Stomach (tissue), 19 donors: ENCODE measurements at regions of chr4 and their contacts with region 1.

Region 1: DNA sequence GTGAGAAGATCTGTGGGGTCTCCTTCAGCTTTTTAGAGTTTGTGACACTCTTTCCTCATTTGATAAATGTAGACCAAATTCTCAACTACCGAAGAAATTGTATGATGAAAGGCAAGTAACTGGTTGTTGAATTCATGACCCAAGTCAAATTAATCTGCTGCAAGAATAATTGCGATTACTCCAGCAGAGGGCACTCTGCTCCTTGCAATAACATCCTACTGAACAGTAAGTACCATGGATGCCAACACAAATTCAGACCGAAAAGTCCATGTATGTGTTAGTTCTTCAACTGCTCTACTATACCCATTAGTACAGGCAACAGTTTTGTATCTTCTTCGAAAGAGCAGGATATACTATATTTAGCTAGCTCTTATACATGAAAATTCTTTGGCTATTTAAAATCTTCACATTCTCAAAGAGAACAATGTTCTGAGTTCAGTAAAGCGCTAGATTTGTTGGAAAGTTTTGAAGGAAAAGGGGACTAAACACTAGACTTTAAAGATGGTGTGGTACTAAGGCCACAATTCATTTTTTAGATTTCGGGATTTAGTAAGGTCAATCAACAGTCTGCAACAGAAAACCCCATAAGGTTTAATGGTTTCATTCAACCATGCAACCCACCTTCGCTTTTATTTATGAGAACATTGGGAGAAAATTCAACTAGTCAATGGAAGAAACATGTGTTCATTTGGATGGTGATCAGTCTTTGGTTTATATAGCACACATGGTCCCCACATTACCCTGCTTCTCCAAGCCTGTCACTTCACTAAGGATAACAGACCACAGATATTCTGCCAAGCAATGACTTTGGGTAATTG is 105.4 kb upstream of the TBC1D9 start:
- DNase-seq: peak; percentile 66 to 94
- H3K4me3 ChIP-seq: no peak overlapping the region
- H3K27ac ChIP-seq: no peak overlapping the region
- H3K4me1 ChIP-seq: peaks cover 0 to 24% (median 7%) of the 10 kb centered on the region in 4 donors
- H3K27me3 ChIP-seq: no peaks in the 10 kb centered on the region
- CTCF ChIP-seq: peak in 5 of 7 experiments; percentile 45 to 78 (median 62)
- EP300 ChIP-seq: no peak
- POLR2A ChIP-seq: no peak

Region 2: GRCh38 chr4:140617499-140618248 is 243.9 kb before region 1 on chr4:
- intact Hi-C with region 1: no loop called
- DNase-seq: peak; percentile 59 to 62
- H3K4me3 ChIP-seq: no peak overlapping the region
- H3K27ac ChIP-seq: no peak overlapping the region
- H3K4me1 ChIP-seq: peaks cover 0 to 6% (median under 1%) of the 10 kb centered on the region in 4 donors
- H3K27me3 ChIP-seq: no peaks in the 10 kb centered on the region
- CTCF ChIP-seq: no peak
- EP300 ChIP-seq: no peak
- POLR2A ChIP-seq: no peak

Region 3: DNA sequence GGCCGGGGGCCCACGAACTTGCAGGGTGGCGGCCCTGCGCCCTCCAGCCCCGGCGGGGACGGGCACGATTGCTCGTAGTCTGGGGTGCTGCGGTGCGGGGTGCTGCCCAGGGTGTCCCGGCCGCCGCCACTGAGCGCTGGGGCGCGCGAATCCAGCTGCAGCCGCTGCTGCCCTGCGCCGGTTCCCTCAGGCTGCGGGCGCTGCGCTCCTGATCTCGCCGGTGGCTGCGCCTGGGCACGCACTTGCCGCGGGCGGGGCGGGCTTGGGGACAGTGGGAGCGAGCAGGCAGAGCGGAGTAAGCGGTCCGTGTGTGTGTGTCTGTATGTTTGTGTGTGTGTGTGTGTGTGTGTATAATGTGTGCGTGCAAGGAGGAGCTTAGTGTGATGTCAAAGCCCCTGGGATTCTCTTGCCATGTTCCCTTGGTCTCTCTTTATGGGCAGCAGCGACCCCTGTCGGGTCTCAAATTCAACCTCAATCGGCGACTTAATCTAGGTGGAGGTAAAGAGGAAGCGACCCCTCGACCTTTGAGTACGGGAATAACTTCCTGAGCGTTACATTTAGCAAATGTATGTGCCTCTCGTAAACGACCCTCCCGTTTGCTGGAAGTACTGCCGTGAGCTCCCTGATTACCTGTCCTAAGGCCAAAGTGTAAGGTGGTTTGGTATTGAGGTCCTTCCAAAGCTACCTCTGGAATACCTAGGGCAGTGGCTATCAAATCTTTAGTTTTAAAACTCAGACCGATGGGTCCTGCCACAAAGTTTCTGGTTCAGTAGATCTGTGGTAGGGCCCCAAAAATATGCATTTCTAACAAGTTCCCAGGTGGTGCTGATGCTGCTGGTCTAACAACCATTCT is 271.8 kb after region 1 on chr4 and contains the start of gene RNF150:
- intact Hi-C with region 1: loop called (anchors 5 kb)
- DNase-seq: peak; percentile 60 to 96
- H3K4me3 ChIP-seq: peak within 1 kb of the TSS; percentile 73 to 89 (median 76)
- H3K27ac ChIP-seq: peak within 1 kb of the TSS; percentile 24 to 84 (median 65)
- H3K4me1 ChIP-seq: peaks cover 13 to 31% (median 25%) of the 10 kb centered on the region in 4 donors
- H3K27me3 ChIP-seq: peaks cover 0 to 52% (median 12%) of the 10 kb centered on the region in 3 donors
- CTCF ChIP-seq: peak in 5 of 7 experiments; percentile 33 to 62 (median 52)
- EP300 ChIP-seq: no peak
- POLR2A ChIP-seq: no peak
- total RNA-seq, gene RNF150: 5.9 to 88.1 (median 21.7) TPM